AG04449 (cell line): ENCODE measurements at regions of chr10 and their contacts with region 1.

Region 1: DNA sequence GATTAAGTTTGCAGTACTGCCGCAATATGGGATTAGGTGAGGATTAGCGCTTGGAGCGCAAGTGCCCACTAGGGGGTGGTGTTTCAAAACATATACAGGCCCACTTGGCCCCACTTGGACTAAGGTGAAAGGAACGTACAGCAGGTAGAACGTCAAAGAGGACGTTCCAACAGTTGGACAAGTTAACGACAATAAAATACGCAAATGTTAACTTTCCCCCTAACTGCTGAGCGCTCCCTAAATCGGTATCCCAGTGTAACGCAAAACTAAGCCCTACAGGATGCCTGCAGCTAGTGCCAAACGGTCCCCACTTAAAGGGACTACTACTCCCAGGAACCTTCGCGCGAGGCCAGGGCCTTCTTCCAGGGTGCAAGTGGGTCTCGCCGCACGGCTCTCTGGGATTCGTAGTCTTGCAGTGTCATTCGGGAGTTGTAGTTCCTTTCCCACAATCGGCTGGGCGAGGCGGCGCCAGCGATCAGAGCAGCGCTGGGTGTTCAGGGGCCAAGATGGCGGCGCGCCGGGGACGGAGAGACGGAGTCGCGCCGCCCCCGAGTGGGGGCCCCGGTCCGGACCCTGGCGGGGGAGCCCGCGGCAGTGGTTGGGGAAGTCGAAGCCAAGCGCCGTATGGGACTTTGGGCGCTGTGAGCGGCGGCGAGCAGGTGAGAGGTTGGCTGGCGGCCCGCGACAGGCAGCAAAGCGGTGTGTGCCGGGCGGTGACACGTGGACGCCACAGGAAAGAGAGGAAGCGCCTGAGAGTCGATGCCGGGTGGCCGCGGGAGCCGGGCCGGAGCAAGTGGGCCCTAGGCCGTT is at the start of gene PPRC1:
- DNase-seq: peak; percentile 91
- H3K4me3 ChIP-seq: peak within 1 kb of the TSS; percentile 96
- CTCF ChIP-seq: peak; percentile 76

Region 2: GRCh38 chr10:101995451-101996063 is 137.2 kb before region 1 on chr10:
- CTCF ChIA-PET with region 1: no interaction called
- POLR2A ChIA-PET with region 1: no interaction called
- DNase-seq: no peak
- H3K4me3 ChIP-seq: no peak overlapping the region
- CTCF ChIP-seq: no peak

Region 3: GRCh38 chr10:102117391-102118159 is 15.2 kb before region 1 on chr10:
- CTCF ChIA-PET with region 1: interaction called, 48 read pairs
- POLR2A ChIA-PET with region 1: interaction called, 4 read pairs
- DNase-seq: no peak
- H3K4me3 ChIP-seq: peak overlapping the region; percentile 91
- CTCF ChIP-seq: peak; percentile 34